K562 (cell line): ENCODE measurements at regions of chr10 and their contacts with region 1.

Region 1: DNA sequence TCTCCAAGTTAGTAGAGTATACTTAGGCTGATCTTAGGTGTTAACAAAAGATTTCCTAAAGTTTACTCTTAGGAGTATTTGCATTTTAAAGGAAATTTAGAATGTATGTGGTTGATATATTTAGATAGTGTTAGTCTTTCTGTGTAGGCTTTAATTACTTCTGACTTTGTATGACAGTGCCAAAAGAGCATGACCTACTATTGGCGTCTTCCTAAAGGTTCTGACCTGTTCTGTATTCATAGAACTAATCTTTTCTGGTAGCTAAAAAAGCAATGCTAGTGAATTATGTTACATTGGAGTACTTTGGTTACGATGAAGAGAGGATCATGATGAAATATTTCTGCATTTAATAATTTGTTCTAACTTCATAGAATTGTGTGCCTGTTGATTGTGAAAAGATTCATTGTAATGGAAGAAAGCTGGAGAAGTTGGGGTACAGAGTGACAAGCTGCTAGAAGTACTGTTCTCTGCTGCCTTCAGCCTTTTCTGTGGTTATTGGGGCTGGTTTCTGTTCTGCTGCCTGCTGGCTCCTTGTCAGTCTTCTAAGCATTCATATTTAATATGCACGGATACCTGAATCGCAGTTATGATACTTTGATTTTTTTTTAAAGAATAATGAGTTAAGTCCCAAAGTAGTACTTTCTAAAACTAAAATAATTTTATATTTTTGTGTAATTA is 13.2 kb downstream of the WAC start:
- DNase-seq: no peak
- ATAC-seq: no peak
- H3K4me3 ChIP-seq: no peak overlapping the region
- H3K27ac ChIP-seq: no peak overlapping the region
- H3K4me1 ChIP-seq: no peaks in the 10 kb centered on the region
- H3K27me3 ChIP-seq: no peaks in the 10 kb centered on the region
- CTCF ChIP-seq: no peak
- EP300 ChIP-seq: no peak
- POLR2A ChIP-seq: no peak
- RAD21 ChIP-seq: no peak

Region 2: GRCh38 chr10:28558923-28559508 is 12.9 kb after region 1 on chr10:
- CTCF ChIA-PET with region 1: no interaction called
- POLR2A ChIA-PET with region 1: interaction called, 22 read pairs
- in situ Hi-C with region 1: no loop called
- intact Hi-C with region 1: no loop called
- DNase-seq: no peak
- ATAC-seq: no peak; the same call in 2 of the 3 replicates
- H3K4me3 ChIP-seq: no peak overlapping the region
- H3K27ac ChIP-seq: no peak overlapping the region
- H3K4me1 ChIP-seq: no peaks in the 10 kb centered on the region; a peak in 1 of 5 replicates
- H3K27me3 ChIP-seq: no peaks in the 10 kb centered on the region
- CTCF ChIP-seq: no peak
- EP300 ChIP-seq: no peak
- POLR2A ChIP-seq: no peak
- RAD21 ChIP-seq: no peak

Region 3: GRCh38 chr10:28564905-28565304 is 18.8 kb after region 1 on chr10:
- CTCF ChIA-PET with region 1: no interaction called
- POLR2A ChIA-PET with region 1: interaction called, 19 read pairs
- in situ Hi-C with region 1: no loop called
- intact Hi-C with region 1: no loop called
- DNase-seq: no peak
- ATAC-seq: no peak
- H3K4me3 ChIP-seq: no peak overlapping the region
- H3K27ac ChIP-seq: no peak overlapping the region
- H3K4me1 ChIP-seq: peaks cover 3 to 9% of the 10 kb centered on the region in 2 experiments; a peak in 4 of 5 replicates
- H3K27me3 ChIP-seq: no peaks in the 10 kb centered on the region
- CTCF ChIP-seq: no peak
- EP300 ChIP-seq: no peak
- POLR2A ChIP-seq: no peak
- RAD21 ChIP-seq: no peak